Motor neuron (in vitro differentiated cells): ENCODE measurements at regions of chr20 and their contacts with region 1.

Region 1: GRCh38 chr20:48921151-48921898 is at the start of gene ARFGEF2:
- ATAC-seq: peak; percentile 83 to 93 (median 89)
- H3K4me3 ChIP-seq: peak within 1 kb of the TSS; percentile 76 to 96 (median 94)
- H3K27ac ChIP-seq: peak within 1 kb of the TSS; percentile 95 to 98
- H3K4me1 ChIP-seq: peaks cover 0 to 14% of the 10 kb centered on the region in 2 donors
- total RNA-seq, gene ARFGEF2: 13.1 to 34.3 (median 23.9) TPM

Region 2: DNA sequence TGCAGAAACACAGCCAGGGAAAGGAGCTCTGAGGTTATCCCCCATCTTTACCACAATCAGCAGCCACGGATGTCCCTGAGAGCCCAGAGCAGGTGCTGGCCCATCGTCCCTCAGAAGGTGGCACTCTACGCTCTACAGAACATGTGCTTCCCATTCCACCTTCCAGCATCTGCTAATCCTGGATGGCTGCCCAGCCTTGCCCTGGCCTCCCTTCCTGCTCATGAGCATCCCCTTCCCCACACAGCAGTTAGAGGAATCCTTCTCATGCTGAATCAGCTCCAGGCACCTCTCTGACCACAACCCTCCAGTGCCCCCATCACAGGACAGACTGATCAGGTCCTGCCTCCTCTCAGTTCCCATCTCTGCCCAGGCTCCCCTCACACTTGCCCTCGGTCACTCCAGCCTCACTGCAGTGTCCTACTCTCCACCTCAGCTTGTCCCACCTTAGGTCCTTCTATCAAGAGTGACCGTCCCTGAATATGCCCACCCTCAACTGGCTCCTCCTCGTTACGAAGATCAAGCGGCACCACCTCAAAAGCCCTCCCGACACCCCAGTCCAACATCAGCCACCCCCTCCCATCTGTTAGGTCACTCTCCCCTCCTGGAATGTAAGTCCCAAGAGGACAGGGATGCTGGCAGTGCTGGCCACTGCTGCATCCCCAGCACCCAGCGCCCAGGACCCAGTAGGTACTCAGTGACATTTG is 376.2 kb before region 1 on chr20:
- in situ Hi-C with region 1: no loop called
- ATAC-seq: peak in 3 of 8 experiments; percentile 16 to 75 (median 57)
- H3K4me3 ChIP-seq: no peak overlapping the region
- H3K27ac ChIP-seq: no peak overlapping the region
- H3K4me1 ChIP-seq: peaks cover 0 to 9% of the 10 kb centered on the region in 2 donors

Region 3: GRCh38 chr20:48657475-48658470 is 263.6 kb before region 1 on chr20:
- in situ Hi-C with region 1: loop called in 4 of 9 experiments (anchors 25 kb)
- ATAC-seq: peak; percentile 79 to 93 (median 84)
- H3K4me3 ChIP-seq: no peak overlapping the region
- H3K27ac ChIP-seq: no peak overlapping the region
- H3K4me1 ChIP-seq: no peaks in the 10 kb centered on the region

Region 4: GRCh38 chr20:48682529-48683251 is 238.6 kb before region 1 on chr20:
- in situ Hi-C with region 1: loop called in 1 of 9 experiments (anchors 25 kb)
- ATAC-seq: peak; percentile 61 to 94 (median 88)
- H3K4me3 ChIP-seq: no peak overlapping the region
- H3K27ac ChIP-seq: peak overlapping the region; percentile 35 to 46
- H3K4me1 ChIP-seq: peaks cover 18 to 20% of the 10 kb centered on the region in 2 donors

Region 5: DNA sequence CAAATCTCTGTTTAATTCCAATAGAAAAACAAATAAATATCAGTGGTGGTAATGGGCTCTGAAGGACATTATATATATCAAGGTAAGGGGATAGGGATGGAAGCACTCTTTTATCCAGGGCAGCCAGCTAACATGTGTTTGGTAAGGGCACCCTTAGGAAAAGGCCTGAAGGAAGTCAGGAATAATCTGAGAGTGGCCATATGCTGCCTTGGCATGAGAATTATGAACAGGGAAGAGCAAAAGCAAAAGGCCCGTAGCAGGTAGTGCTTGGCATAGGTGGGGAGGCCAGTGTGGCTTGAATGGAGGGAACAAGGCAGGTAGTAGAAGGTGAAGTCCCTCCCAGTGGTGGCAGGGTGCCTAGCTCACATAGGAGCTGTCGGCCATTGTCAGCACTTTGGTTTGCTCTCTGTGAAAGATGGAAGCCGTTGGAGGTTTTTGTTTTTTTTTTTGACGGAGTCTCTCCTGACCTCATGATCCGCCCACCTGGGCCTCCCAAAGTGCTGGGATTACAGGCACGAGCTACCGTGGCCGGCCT is 85.2 kb after region 1 on chr20:
- in situ Hi-C with region 1: no loop called
- ATAC-seq: no peak
- H3K4me3 ChIP-seq: no peak overlapping the region
- H3K27ac ChIP-seq: no peak overlapping the region
- H3K4me1 ChIP-seq: no peaks in the 10 kb centered on the region